ENCODE measurements at regions of chr1 and their contacts with region 1.

Region 1: DNA sequence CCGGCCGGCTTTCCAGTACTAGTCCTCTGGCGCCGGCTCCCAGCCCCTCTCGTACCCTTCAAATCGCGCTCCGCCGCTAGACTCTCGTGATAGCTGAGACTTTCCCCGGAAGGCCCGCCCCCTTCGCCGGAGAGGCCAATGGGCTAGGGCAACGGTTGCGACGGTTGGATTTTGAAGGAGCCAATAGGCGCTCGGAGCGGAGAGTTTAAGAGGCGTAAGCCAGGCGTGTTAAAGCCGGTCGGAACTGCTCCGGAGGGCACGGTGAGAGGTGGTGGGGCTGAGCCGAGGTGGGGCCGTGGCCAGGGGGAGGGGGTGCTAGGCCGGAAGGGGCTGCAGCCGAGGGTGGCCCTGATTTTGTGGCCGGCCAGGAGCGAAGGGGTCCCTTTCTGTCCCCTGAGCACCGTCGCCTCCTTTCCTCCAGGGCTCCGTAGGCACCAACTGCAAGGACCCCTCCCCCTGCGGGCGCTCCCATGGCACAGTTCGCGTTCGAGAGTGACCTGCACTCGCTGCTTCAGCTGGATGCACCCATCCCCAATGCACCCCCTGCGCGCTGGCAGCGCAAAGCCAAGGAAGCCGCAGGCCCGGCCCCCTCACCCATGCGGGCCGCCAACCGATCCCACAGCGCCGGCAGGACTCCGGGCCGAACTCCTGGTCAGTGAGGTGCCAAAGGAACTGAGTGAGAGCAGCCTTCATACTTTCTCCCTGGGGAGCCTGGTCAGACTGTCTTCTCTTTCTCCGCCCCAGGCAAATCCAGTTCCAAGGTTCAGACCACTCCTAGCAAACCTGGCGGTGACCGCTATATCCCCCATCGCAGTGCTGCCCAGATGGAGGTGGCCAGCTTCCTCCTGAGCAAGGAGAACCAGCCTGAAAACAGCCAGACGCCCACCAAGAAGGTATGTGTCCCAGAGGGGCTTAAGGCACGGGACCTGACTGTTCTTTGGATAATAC is at the start of gene CDC20:
- DNase-seq: peak; percentile 96
- ATAC-seq: peak; percentile 92
- H3K4me3 ChIP-seq: peak within 1 kb of the TSS; percentile 76 to 91
- H3K27ac ChIP-seq: peak within 1 kb of the TSS; percentile 80
- H3K4me1 ChIP-seq: peaks cover 13 to 53% of the 10 kb centered on the region in 2 experiments
- H3K27me3 ChIP-seq: no peaks in the 10 kb centered on the region
- CTCF ChIP-seq: no peak
- POLR2A ChIP-seq: peak; percentile 76
- RAD21 ChIP-seq: no peak
- total RNA-seq, gene CDC20: 355 TPM

Region 2: GRCh38 chr1:43285269-43285990 is 73.6 kb before region 1 on chr1 and contains the start of gene C1orf210:
- CTCF ChIA-PET with region 1: interaction called, 15 read pairs
- POLR2A ChIA-PET with region 1: interaction called, 10 read pairs
- RAD21 ChIA-PET with region 1: interaction called in 1 of 2 experiments, 4 read pairs
- intact Hi-C with region 1: no loop called
- DNase-seq: peak; percentile 81
- ATAC-seq: peak; percentile 97
- H3K4me3 ChIP-seq: peak within 1 kb of the TSS; percentile 70 to 72
- H3K27ac ChIP-seq: peak within 1 kb of the TSS; percentile 55
- H3K4me1 ChIP-seq: peaks cover 14 to 27% of the 10 kb centered on the region in 2 experiments; a peak in 3 of 4 replicates
- H3K27me3 ChIP-seq: 0 out of 2 replicates have a peak, but pooled peaks cover 3% of the 10 kb centered on the region
- CTCF ChIP-seq: peak in 2 of 3 experiments; percentile 75 to 76; a peak in 4 of 6 replicates
- POLR2A ChIP-seq: no peak
- RAD21 ChIP-seq: peak; percentile 45; the same call in 1 of the 2 replicates
- total RNA-seq, gene C1orf210: 7.6 TPM